ENCODE measurements at regions of chrX and their contacts with region 1.

Region 1: DNA sequence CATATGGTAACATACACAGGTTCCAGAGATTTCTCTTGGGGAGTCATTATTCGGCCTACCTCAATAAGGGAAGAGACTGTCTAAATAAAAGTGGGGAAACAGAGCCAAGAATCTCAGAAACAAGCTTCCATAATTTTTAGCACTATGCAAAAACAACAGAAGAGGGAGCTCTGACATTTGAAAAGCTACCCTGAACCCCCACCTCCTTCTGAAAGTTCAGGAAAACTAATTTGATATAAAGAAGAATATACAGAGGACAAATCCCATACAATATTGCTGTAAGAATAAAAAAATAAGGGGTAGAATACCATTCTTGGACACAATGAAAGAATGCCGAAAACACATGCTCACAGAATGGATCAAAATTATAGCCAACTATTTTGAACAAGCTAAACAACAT is 14.3 kb upstream of the ZNF41 start:
- DNase-seq: no peak
- H3K4me3 ChIP-seq: no peak overlapping the region
- H3K4me3 Mint-ChIP-seq: no peak overlapping the region
- H3K27ac ChIP-seq: no peak overlapping the region
- H3K27ac Mint-ChIP-seq: no peak overlapping the region
- H3K4me1 ChIP-seq: no peaks in the 10 kb centered on the region
- H3K4me1 Mint-ChIP-seq: peaks cover 0 to 5% (median 0%) of the 10 kb centered on the region in 4 donors
- H3K27me3 ChIP-seq: no peaks in the 10 kb centered on the region
- H3K27me3 Mint-ChIP-seq: peaks cover 0 to 2% of the 10 kb centered on the region in 2 donors

Region 2: GRCh38 chrX:47523297-47523696 is 26.0 kb after region 1 on chrX:
- CTCF ChIA-PET with region 1: interaction called, 20 read pairs
- POLR2A ChIA-PET with region 1: no interaction called
- intact Hi-C with region 1: loop called (anchors 1 kb)
- DNase-seq: peak; percentile 65 to 75 (median 70)
- H3K4me3 ChIP-seq: peak overlapping the region in 1 of 2 donors; percentile 32
- H3K4me3 Mint-ChIP-seq: peak overlapping the region; percentile 66 to 76 (median 74)
- H3K27ac ChIP-seq: no peak overlapping the region
- H3K27ac Mint-ChIP-seq: peak overlapping the region in 3 of 7 donors; percentile 17 to 25 (median 19)
- H3K4me1 ChIP-seq: peaks cover 5% of the 10 kb centered on the region
- H3K4me1 Mint-ChIP-seq: peaks cover 0 to 4% (median under 1%) of the 10 kb centered on the region in 4 donors
- H3K27me3 ChIP-seq: no peaks in the 10 kb centered on the region
- H3K27me3 Mint-ChIP-seq: no peaks in the 10 kb centered on the region